ENCODE measurements at regions of chr1 and their contacts with region 1.

Region 1: GRCh38 chr1:164617377-164618201 is 58.6 kb downstream of the PBX1 start:
- DNase-seq: peak; percentile 18
- H3K4me3 ChIP-seq: no peak overlapping the region
- H3K27ac ChIP-seq: no peak overlapping the region
- H3K4me1 ChIP-seq: peaks cover 11% of the 10 kb centered on the region
- H3K27me3 ChIP-seq: no peaks in the 10 kb centered on the region
- CTCF ChIP-seq: peak; percentile 65 to 73

Region 2: GRCh38 chr1:163410073-163410999 is 1207.3 kb before region 1 on chr1:
- CTCF ChIA-PET with region 1: no interaction called
- dilution Hi-C with region 1: no loop called
- in situ Hi-C with region 1: no loop called
- intact Hi-C with region 1: loop called (anchors 10 kb)
- DNase-seq: peak; percentile 26
- H3K4me3 ChIP-seq: no peak overlapping the region
- H3K27ac ChIP-seq: no peak overlapping the region
- H3K4me1 ChIP-seq: no peaks in the 10 kb centered on the region
- H3K27me3 ChIP-seq: no peaks in the 10 kb centered on the region
- CTCF ChIP-seq: peak; percentile 79 to 87

Region 3: GRCh38 chr1:163535807-163536206 is 1081.8 kb before region 1 on chr1:
- CTCF ChIA-PET with region 1: no interaction called
- dilution Hi-C with region 1: no loop called
- in situ Hi-C with region 1: no loop called
- intact Hi-C with region 1: loop called (anchors 5 kb)
- DNase-seq: peak; percentile 3
- H3K4me3 ChIP-seq: no peak overlapping the region
- H3K27ac ChIP-seq: no peak overlapping the region
- H3K4me1 ChIP-seq: no peaks in the 10 kb centered on the region
- H3K27me3 ChIP-seq: no peaks in the 10 kb centered on the region
- CTCF ChIP-seq: peak; percentile 22 to 42

Region 4: DNA sequence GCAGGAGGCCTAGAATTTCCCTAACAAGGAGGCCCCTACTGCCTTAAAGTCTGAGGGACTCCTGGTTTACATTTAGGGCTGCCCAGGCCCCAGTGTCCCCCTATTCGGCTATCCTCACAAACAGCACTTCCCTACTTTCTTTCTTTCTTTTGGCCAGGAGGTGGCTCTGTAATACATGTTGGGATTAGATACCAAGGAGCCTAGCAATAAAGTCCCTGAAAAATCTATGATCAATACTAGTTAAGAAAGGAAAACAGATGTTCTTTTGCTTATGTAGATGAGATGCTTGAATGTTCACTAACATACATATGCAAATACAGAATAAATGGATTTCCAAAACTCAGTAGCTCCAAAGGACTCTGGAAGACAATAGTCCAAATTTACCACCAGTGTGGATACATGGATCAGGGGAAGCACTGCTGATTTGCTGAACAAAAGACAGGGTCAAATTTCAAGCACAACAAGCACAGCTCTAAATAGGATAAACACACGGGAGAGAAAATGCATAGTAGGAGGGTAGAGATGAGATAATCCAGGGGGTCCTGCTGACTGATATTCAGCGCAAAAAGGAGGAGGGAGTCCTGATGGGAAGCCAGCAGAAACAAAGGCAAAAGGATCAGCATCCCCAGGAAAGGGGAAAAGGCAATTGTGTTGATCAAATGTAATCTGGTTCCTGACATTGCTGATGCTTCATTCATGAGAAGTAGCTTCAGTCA is 1055.9 kb before region 1 on chr1:
- CTCF ChIA-PET with region 1: no interaction called
- dilution Hi-C with region 1: no loop called
- in situ Hi-C with region 1: no loop called
- intact Hi-C with region 1: loop called (anchors 10 kb)
- DNase-seq: no peak
- H3K4me3 ChIP-seq: no peak overlapping the region
- H3K27ac ChIP-seq: no peak overlapping the region
- H3K4me1 ChIP-seq: no peaks in the 10 kb centered on the region
- H3K27me3 ChIP-seq: no peaks in the 10 kb centered on the region
- CTCF ChIP-seq: peak; percentile 5 to 35

Region 5: GRCh38 chr1:164440232-164440631 is 177.4 kb before region 1 on chr1:
- CTCF ChIA-PET with region 1: no interaction called
- dilution Hi-C with region 1: no loop called
- in situ Hi-C with region 1: no loop called
- intact Hi-C with region 1: loop called (anchors 1 kb)
- DNase-seq: no peak
- H3K4me3 ChIP-seq: no peak overlapping the region
- H3K27ac ChIP-seq: no peak overlapping the region
- H3K4me1 ChIP-seq: no peaks in the 10 kb centered on the region
- H3K27me3 ChIP-seq: no peaks in the 10 kb centered on the region
- CTCF ChIP-seq: peak; percentile 12 to 31

Region 6: GRCh38 chr1:164510435-164510834 is 107.2 kb before region 1 on chr1:
- CTCF ChIA-PET with region 1: no interaction called
- dilution Hi-C with region 1: no loop called
- in situ Hi-C with region 1: no loop called
- intact Hi-C with region 1: loop called (anchors 2 kb)
- DNase-seq: no peak
- H3K4me3 ChIP-seq: no peak overlapping the region
- H3K27ac ChIP-seq: no peak overlapping the region
- H3K4me1 ChIP-seq: no peaks in the 10 kb centered on the region
- H3K27me3 ChIP-seq: peaks cover 3% of the 10 kb centered on the region
- CTCF ChIP-seq: peak in 1 of 2 donors; percentile 27

Region 7: DNA sequence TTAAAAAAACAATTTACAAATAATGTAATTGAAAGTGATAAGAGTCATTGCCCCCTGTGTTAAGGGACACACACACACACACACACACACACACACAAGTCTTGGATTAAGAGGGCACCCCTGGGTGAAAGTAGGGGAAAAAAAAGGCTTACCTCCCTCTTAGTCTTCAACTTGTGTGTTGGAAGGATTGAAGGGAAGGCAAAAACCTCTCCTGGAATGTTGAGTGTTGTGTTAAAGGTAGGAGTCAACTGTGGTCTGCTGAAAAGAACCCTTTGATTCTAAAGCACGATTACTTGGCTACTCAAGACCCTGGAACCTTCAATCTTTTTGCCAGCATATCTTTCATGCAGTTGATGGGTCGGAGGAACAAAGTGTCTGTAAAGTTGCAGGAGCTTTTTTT is 52.2 kb before region 1 on chr1:
- CTCF ChIA-PET with region 1: no interaction called
- dilution Hi-C with region 1: no loop called
- in situ Hi-C with region 1: no loop called
- intact Hi-C with region 1: no loop called
- DNase-seq: no peak
- H3K4me3 ChIP-seq: peak overlapping the region in 2 of 3 experiments; percentile 7 to 94
- H3K27ac ChIP-seq: no peak overlapping the region
- H3K4me1 ChIP-seq: peaks cover 7% of the 10 kb centered on the region
- H3K27me3 ChIP-seq: no peaks in the 10 kb centered on the region
- CTCF ChIP-seq: no peak

Region 8: GRCh38 chr1:164813776-164814175 is 196.2 kb after region 1 on chr1:
- CTCF ChIA-PET with region 1: no interaction called
- dilution Hi-C with region 1: no loop called
- in situ Hi-C with region 1: no loop called
- intact Hi-C with region 1: no loop called
- DNase-seq: no peak
- H3K4me3 ChIP-seq: no peak overlapping the region
- H3K27ac ChIP-seq: no peak overlapping the region
- H3K4me1 ChIP-seq: no peaks in the 10 kb centered on the region
- H3K27me3 ChIP-seq: no peaks in the 10 kb centered on the region
- CTCF ChIP-seq: no peak

Measured in mammary epithelial cell (primary cell).